AG04450 (cell line): ENCODE measurements at regions of chr19 and their contacts with region 1.

Region 1: DNA sequence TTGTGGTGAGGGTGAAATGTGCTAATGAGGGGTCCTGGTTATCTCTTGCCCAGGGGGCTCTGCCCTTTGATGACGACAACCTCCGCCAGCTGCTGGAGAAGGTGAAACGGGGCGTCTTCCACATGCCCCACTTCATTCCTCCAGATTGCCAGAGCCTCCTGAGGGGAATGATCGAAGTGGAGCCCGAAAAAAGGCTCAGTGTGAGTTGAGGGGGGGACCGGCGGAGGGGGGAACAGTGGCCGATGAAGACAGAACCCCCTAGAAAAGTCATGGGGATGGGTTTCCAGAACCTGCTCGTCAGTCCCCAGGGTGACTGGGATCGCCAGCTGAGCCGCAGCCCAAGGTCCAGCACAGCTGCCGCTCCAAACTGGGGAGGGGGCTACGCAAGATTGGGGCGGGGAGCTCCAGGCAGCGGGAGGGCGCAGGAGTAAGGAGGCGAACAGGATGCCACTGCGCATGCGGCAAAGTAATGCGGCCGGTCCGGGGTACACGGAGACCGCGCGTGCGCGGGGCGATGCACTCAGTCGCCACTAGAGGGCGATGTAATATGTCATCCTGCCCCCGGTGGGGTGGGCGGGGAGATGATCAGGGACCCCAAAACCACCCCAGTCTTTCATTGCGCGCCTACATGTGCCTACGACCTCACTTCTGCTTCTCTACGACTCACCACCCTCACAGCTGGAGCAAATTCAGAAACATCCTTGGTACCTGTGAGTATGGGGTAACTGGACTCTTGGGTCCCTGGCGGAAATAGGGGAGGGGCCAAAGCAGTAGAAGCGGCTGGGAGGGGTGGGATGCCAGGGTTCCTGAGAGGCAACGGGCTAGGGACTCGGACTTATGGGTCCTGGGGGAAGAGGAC is 17.9 kb downstream of the BRSK1 start:
- DNase-seq: peak; percentile 24
- H3K4me3 ChIP-seq: peak overlapping the region; percentile 41
- H3K27ac ChIP-seq: no peak overlapping the region
- H3K27me3 ChIP-seq: no peaks in the 10 kb centered on the region
- CTCF ChIP-seq: peak; percentile 78

Region 2: DNA sequence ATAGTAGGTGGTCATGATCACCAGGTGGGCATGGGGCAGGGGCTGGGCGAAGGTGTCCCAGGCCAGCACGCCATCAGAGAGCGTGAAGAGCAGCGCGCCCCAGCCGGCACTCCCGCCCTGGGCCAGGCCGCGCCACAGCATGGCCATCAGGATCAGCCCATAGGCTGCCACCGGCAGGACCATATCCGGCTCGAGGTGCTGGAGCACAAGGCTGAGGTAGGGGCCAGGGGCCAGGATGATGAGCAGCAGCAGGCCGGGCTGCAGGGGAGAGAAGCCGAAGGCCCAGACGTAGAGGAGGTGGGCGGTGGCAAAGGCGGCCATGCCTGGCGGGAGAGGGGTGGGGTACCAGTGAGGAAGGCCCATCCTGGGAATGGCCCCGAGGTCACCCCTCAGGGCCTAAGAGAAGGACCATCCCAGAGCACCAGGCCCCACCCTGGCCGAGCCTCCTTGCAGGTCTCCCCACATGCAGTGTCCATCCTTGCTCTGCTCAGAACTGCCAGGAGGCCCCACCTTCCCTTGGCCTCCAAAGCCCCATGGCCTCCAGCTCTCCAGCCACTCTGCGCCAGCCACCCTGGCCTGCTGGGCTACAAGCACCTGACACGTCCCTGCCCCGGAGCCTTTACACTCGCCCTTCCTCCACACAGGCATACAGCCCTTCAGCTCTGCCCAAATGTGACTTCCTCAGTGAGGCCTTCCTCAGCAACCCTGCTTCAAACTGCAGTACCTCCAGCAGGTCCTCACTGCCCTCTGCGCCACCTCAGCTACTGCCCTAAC is 74.3 kb before region 1 on chr19:
- CTCF ChIA-PET with region 1: no interaction called
- POLR2A ChIA-PET with region 1: no interaction called
- DNase-seq: no peak
- H3K4me3 ChIP-seq: no peak overlapping the region
- H3K27ac ChIP-seq: no peak overlapping the region
- H3K27me3 ChIP-seq: no peaks in the 10 kb centered on the region
- CTCF ChIP-seq: no peak

Region 3: GRCh38 chr19:55270172-55270942 is 31.3 kb before region 1 on chr19:
- CTCF ChIA-PET with region 1: no interaction called
- POLR2A ChIA-PET with region 1: no interaction called
- DNase-seq: no peak
- H3K4me3 ChIP-seq: no peak overlapping the region
- H3K27ac ChIP-seq: no peak overlapping the region
- H3K27me3 ChIP-seq: no peaks in the 10 kb centered on the region
- CTCF ChIP-seq: no peak

Region 4: DNA sequence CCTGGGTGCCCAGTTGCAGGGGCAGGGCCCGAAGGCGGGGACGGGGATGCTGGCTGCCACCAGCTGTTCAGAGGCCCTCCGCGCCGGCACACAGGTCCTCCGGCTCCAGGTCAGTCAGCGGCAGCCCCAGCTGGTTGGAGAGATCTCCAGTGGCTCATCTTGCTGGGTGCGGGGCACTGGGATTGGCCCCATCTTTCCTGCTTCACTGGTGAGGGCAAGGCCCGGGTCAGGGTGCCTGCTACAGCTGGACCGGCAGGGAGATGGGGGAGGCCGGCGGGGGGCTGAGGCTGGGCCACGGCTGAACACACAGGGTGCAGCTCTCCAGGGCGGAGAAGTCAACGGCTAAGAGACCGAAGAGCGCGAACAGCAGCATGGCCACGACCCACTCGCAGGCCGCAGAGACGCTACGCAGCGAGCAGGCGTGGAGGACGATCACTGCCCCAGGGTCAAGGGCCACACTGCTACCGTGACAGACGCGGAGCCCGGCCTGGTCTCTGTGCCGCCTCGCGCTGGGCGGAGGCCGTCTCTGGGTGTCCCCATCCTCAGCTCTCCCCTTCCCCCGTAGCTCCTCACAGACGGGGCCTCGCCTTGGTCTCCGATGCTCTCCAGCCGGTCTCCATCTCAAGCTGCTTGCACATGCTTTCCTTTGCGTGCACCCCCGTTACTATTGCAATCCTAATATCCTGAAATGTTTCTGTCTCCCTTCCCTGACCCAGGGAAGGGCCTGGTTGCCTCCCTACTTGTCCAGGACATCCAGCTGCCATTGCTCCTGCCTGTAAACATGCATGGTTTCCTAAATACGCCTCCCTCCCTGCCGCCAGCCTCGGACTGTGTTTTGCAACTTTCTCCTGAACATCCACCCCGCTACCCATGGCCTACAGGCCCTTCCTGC is 11.2 kb after region 1 on chr19:
- CTCF ChIA-PET with region 1: interaction called, 27 read pairs
- POLR2A ChIA-PET with region 1: no interaction called
- DNase-seq: no peak
- H3K4me3 ChIP-seq: no peak overlapping the region
- H3K27ac ChIP-seq: no peak overlapping the region
- H3K27me3 ChIP-seq: no peaks in the 10 kb centered on the region
- CTCF ChIP-seq: no peak

Region 5: GRCh38 chr19:55339048-55339888 is 37.6 kb after region 1 on chr19 and contains the start of gene KMT5C:
- CTCF ChIA-PET with region 1: interaction called, 34 read pairs
- POLR2A ChIA-PET with region 1: no interaction called
- DNase-seq: peak; percentile 100
- H3K4me3 ChIP-seq: peak within 1 kb of the TSS; percentile 79
- H3K27ac ChIP-seq: peak within 1 kb of the TSS; percentile 91
- H3K27me3 ChIP-seq: no peaks in the 10 kb centered on the region
- CTCF ChIP-seq: peak; percentile 43
- polyA plus RNA-seq, gene KMT5C: 2.6 and 3.7 TPM in 2 replicates

Region 6: GRCh38 chr19:55418185-55418584 is 116.5 kb after region 1 on chr19:
- CTCF ChIA-PET with region 1: interaction called, 13 read pairs
- POLR2A ChIA-PET with region 1: no interaction called
- DNase-seq: peak; percentile 73
- H3K4me3 ChIP-seq: no peak overlapping the region
- H3K27ac ChIP-seq: no peak overlapping the region
- H3K27me3 ChIP-seq: peaks cover 5% of the 10 kb centered on the region
- CTCF ChIP-seq: peak; percentile 82